ENCODE measurements at regions of chr7 and their contacts with region 1.

Region 1: DNA sequence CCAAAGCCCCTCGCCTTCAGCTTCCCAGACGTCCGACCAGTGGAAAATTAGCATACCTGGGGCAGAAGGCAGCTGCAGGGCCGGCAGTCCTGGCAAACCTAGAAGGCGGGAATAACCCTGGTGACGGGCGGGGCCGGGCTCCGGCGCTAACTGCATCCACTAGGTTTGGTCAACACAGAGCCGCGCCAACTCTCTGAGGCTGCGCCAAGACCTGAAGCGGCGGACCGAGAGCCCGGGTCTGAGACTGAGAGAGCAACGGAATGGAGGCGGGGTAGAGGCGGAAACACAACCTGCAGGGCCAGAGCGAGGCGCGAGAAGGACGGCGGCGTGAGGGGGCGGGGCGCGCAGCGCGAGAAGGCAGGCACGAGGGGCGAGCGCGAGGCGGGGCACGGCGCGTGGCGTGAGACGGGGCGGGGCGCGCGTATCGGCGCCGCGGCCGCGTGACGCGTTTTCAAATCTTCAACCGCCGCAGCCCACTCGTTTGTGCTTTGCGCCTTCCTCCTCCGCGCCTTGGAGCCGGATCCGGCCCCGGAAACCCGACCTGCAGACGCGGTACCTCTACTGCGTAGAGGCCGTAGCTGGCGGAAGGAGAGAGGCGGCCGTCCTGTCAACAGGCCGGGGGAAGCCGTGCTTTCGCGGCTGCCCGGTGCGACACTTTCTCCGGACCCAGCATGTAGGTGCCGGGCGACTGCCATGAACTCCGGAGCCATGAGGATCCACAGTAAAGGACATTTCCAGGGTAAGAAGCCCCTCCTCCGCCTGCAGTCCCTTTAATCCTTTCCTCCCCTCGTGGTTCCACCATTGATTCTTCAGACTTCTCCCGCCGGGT is at the starts of genes DBF4 and SLC25A40:
- DNase-seq: peak; percentile 98
- H3K4me3 ChIP-seq: peak within 1 kb of the TSS; percentile 59 to 92 (median 85)
- H3K27ac ChIP-seq: peak within 1 kb of the TSS; percentile 97 to 98 (median 98)
- H3K4me1 ChIP-seq: peaks cover 14 to 38% (median 27%) of the 10 kb centered on the region in 4 donors
- H3K27me3 ChIP-seq: no peaks in the 10 kb centered on the region
- CTCF ChIP-seq: no peak
- EP300 ChIP-seq: no peak
- POLR2A ChIP-seq: peak; percentile 81
- total RNA-seq, gene DBF4: 9.0 to 50.0 (median 11.1) TPM
- total RNA-seq, gene SLC25A40: 1.4 to 50.8 (median 25.4) TPM

Region 2: GRCh38 chr7:87345166-87345927 is 530.9 kb before region 1 on chr7 and contains the start of gene CROT:
- in situ Hi-C with region 1: loop called in 3 of 4 experiments (anchors 25 kb)
- intact Hi-C with region 1: no loop called
- DNase-seq: peak; percentile 98
- H3K4me3 ChIP-seq: peak within 1 kb of the TSS; percentile 54 to 69 (median 62)
- H3K27ac ChIP-seq: peak within 1 kb of the TSS; percentile 87 to 94 (median 91)
- H3K4me1 ChIP-seq: peaks cover 4 to 36% (median 12%) of the 10 kb centered on the region in 4 donors
- H3K27me3 ChIP-seq: no peaks in the 10 kb centered on the region
- CTCF ChIP-seq: peak in 1 of 5 experiments; percentile 7
- EP300 ChIP-seq: no peak
- POLR2A ChIP-seq: peak; percentile 78
- total RNA-seq, gene CROT: 11.9 to 49.9 (median 27.6) TPM

Region 3: DNA sequence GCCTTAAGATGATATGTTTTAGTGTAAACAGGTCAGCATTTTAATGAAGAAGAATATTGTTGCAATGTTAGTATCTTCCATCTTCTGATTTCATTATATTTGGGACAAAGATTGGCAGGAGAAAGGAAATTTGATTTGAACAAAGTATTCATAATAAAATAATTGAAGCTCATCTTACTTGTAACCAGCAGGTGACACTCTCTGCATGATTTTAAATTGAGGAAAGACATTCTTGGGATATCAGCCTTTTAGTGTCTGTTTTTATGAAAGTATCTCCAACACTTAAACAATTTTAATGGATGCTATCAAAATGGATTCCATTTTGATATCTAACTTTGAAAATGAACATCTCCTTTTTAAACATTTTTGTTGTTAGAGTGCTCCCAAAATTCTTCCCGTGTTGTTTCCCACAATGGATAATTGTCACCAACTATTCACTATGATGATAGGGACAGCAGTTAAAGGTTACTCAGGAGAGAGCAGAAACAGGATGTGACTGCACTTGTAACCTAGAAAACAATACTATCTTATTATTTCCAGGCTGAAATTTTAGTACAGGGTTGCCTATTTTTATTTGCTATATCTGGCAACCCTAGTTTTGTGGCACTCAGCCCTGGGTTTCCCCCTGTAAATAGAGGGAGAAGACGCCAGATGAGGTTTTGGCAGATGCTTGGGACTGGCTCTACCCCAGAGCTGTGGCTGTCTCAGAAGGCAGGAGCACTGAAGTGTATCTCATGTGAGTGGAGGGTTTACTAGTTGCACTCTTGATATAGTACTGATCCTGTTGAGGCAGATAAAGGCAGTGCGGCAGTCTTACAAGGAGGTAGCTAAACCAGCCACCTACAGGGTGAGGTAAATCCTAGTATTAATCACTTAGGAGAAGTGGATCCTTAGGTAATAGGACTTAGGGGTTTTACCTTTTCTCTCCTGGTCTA is 369.7 kb before region 1 on chr7:
- in situ Hi-C with region 1: loop called in 2 of 4 experiments (anchors 10 to 25 kb)
- intact Hi-C with region 1: no loop called
- DNase-seq: no peak
- H3K4me3 ChIP-seq: no peak overlapping the region
- H3K27ac ChIP-seq: no peak overlapping the region
- H3K4me1 ChIP-seq: no peaks in the 10 kb centered on the region
- H3K27me3 ChIP-seq: no peaks in the 10 kb centered on the region
- CTCF ChIP-seq: peak; percentile 35 to 54 (median 40)
- EP300 ChIP-seq: no peak
- POLR2A ChIP-seq: no peak

Region 4: GRCh38 chr7:87608443-87608842 is 267.8 kb before region 1 on chr7:
- in situ Hi-C with region 1: no loop called
- intact Hi-C with region 1: no loop called
- DNase-seq: no peak
- H3K4me3 ChIP-seq: no peak overlapping the region
- H3K27ac ChIP-seq: no peak overlapping the region
- H3K4me1 ChIP-seq: peaks cover 0 to 10% (median 0%) of the 10 kb centered on the region in 4 donors
- H3K27me3 ChIP-seq: peaks cover 4% of the 10 kb centered on the region
- CTCF ChIP-seq: no peak
- EP300 ChIP-seq: no peak
- POLR2A ChIP-seq: no peak

Region 5: DNA sequence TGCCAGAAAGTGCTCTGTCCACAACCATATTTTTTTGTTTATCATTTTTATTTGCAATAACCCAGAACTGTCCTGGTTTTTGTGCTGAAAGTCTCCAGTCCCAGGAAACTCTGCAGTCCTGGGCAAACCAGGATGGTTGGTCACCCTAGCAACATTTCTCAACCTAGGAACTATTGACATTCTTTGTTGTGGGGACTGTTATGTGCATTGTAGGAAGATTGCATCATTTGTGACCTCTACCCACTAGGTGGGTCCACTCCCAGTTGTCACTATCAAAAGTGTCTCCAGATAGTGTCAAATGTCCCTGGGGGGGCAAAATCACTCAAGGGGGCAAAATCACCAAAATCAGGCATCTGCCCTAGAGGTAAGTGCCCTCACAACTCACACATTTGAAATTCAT is 357.6 kb after region 1 on chr7:
- in situ Hi-C with region 1: no loop called
- intact Hi-C with region 1: no loop called
- DNase-seq: no peak
- H3K4me3 ChIP-seq: no peak overlapping the region
- H3K27ac ChIP-seq: no peak overlapping the region
- H3K4me1 ChIP-seq: peaks cover 0 to 7% (median 3%) of the 10 kb centered on the region in 4 donors
- H3K27me3 ChIP-seq: no peaks in the 10 kb centered on the region
- CTCF ChIP-seq: no peak
- EP300 ChIP-seq: no peak
- POLR2A ChIP-seq: no peak